ENCODE measurements at regions of chr1 and their contacts with region 1.

Region 1: GRCh38 chr1:32933742-32934322 is 30.8 kb downstream of the RNF19B start:
- DNase-seq: peak; percentile 76
- ATAC-seq: peak; percentile 69
- H3K4me3 ChIP-seq: no peak overlapping the region
- H3K27ac ChIP-seq: peak overlapping the region; percentile 18; the same call in 1 of the 2 replicates
- H3K4me1 ChIP-seq: peaks cover 28% of the 10 kb centered on the region
- H3K27me3 ChIP-seq: no peaks in the 10 kb centered on the region
- CTCF ChIP-seq: no peak

Region 2: DNA sequence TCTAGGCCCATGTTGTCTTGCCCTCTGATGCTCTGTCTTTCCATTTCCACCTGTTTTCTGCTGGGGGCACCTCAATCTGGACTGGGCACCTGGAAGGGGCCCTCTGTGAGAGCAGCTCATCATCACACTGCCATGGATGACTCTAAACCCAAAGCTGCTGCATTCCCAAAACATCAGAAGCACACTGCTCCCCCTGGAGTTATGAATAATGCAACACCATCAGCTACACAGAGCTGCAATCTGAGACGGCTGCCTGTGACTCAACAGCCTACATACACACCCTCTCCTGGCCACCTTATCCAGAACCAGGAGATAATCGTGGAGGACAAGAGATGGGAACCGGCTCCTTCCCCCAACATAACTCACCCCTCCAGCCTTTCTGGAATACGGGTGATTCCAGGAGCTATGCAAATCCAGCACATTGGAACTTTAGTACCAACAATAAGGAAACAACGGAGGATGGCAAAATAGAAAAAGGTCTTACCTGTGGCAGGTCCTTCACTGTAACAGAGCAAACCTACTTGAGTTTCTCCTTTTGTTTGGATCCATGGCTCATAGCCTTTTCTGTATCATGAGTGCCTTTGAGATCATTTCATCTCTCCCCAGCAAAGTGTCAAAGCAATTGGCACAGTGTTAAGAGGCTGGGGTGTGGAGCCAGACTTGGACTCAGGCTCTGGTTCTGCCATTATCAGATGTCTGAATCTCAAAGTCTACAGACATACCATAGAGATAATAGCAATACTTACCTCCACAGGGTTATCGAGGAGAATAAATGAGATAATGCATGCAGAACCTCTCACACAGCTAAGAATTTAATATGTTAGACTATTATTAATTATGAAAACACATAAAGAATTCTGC is 73.6 kb after region 1 on chr1:
- CTCF ChIA-PET with region 1: interaction called, 9 read pairs
- POLR2A ChIA-PET with region 1: interaction called, 3 read pairs
- intact Hi-C with region 1: loop called (anchors 1 kb)
- DNase-seq: peak; percentile 93
- ATAC-seq: peak; percentile 97
- H3K4me3 ChIP-seq: no peak overlapping the region
- H3K27ac ChIP-seq: peak overlapping the region; percentile 28
- H3K4me1 ChIP-seq: peaks cover 40% of the 10 kb centered on the region
- H3K27me3 ChIP-seq: no peaks in the 10 kb centered on the region
- CTCF ChIP-seq: peak; percentile 86

Region 3: GRCh38 chr1:33080885-33081553 is 147.2 kb after region 1 on chr1 and contains the start of gene AZIN2:
- CTCF ChIA-PET with region 1: interaction called, 10 read pairs
- POLR2A ChIA-PET with region 1: no interaction called
- intact Hi-C with region 1: loop called (anchors 2 kb)
- DNase-seq: peak; percentile 96
- ATAC-seq: peak; percentile 99
- H3K4me3 ChIP-seq: peak within 1 kb of the TSS; percentile 89
- H3K27ac ChIP-seq: no peak within 1 kb of the TSS
- H3K4me1 ChIP-seq: peaks cover 12% of the 10 kb centered on the region; the same call in 1 of the 2 replicates
- H3K27me3 ChIP-seq: no peaks in the 10 kb centered on the region
- CTCF ChIP-seq: no peak
- total RNA-seq, gene AZIN2: 2.2 and 3.3 TPM in 2 replicates

Region 4: DNA sequence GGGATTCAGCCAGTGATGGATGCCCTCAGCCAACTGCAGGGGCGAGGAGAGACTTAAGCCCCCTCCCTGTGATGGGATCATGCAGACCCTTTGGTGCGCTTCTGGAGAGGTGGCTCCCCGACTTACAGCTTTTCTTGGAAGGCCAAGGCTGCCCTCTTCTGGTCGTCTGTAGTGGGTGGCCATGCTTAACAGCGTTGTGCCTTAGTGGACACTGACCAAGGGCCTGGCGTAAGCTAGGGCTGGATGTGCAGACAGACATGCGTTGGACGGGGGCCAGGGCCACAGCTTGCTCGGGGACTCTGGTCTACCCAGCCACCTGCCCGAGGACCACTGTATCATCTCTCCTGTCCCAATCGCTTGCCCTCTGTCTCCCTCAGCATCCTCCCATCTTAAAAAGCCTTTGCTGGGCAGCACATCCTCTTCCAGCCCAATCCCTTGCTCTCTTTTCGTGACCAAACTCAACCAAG is 152.6 kb after region 1 on chr1:
- CTCF ChIA-PET with region 1: interaction called, 10 read pairs
- POLR2A ChIA-PET with region 1: interaction called, 8 read pairs
- intact Hi-C with region 1: loop called (anchors 2 kb)
- DNase-seq: peak; percentile 75
- ATAC-seq: peak; percentile 92
- H3K4me3 ChIP-seq: no peak overlapping the region
- H3K27ac ChIP-seq: no peak overlapping the region
- H3K4me1 ChIP-seq: peaks cover 10% of the 10 kb centered on the region; the same call in 1 of the 2 replicates
- H3K27me3 ChIP-seq: no peaks in the 10 kb centered on the region
- CTCF ChIP-seq: peak; percentile 91

Region 5: GRCh38 chr1:33181921-33182341 is 248.1 kb after region 1 on chr1 and contains the start of gene TRIM62:
- CTCF ChIA-PET with region 1: no interaction called
- POLR2A ChIA-PET with region 1: no interaction called
- intact Hi-C with region 1: no loop called
- DNase-seq: peak; percentile 87
- ATAC-seq: peak; percentile 57
- H3K4me3 ChIP-seq: peak within 1 kb of the TSS; percentile 79
- H3K27ac ChIP-seq: no peak within 1 kb of the TSS
- H3K4me1 ChIP-seq: peaks cover 21% of the 10 kb centered on the region
- H3K27me3 ChIP-seq: no peaks in the 10 kb centered on the region
- CTCF ChIP-seq: no peak
- total RNA-seq, gene TRIM62: 3.9 and 9.7 TPM in 2 replicates

Measured in PC-3 (cell line).